B cell (primary cell): ENCODE measurements at regions of chr7 and their contacts with region 1.

Region 1: GRCh38 chr7:63900394-63901203 is 98.0 kb upstream of the ZNF722 start:
- DNase-seq: peak; percentile 94
- ATAC-seq: peak; percentile 87
- H3K4me3 ChIP-seq: peak overlapping the region in 4 of 5 experiments; percentile 70 to 84 (median 78)
- H3K4me3 Mint-ChIP-seq: peak overlapping the region; percentile 93
- H3K27ac ChIP-seq: peak overlapping the region; percentile 72 to 86
- H3K27ac Mint-ChIP-seq: peak overlapping the region; percentile 93
- H3K4me1 ChIP-seq: peaks cover 0 to 16% of the 10 kb centered on the region in 2 donors
- H3K4me1 Mint-ChIP-seq: peaks cover 5% of the 10 kb centered on the region
- H3K27me3 ChIP-seq: no peaks in the 10 kb centered on the region
- H3K27me3 Mint-ChIP-seq: no peaks in the 10 kb centered on the region
- CTCF ChIP-seq: no peak

Region 2: GRCh38 chr7:63925623-63926460 is 25.2 kb after region 1 on chr7:
- CTCF ChIA-PET with region 1: interaction called, 10 read pairs
- POLR2A ChIA-PET with region 1: interaction called, 8 read pairs
- intact Hi-C with region 1: no loop called
- DNase-seq: peak; percentile 96
- ATAC-seq: peak; percentile 89
- H3K4me3 ChIP-seq: peak overlapping the region; percentile 55 to 87 (median 71)
- H3K4me3 Mint-ChIP-seq: peak overlapping the region; percentile 93
- H3K27ac ChIP-seq: peak overlapping the region; percentile 84 to 85
- H3K27ac Mint-ChIP-seq: peak overlapping the region; percentile 96
- H3K4me1 ChIP-seq: peaks cover 0 to 11% of the 10 kb centered on the region in 2 donors
- H3K4me1 Mint-ChIP-seq: peaks cover 3% of the 10 kb centered on the region
- H3K27me3 ChIP-seq: no peaks in the 10 kb centered on the region
- H3K27me3 Mint-ChIP-seq: no peaks in the 10 kb centered on the region
- CTCF ChIP-seq: no peak